ENCODE measurements at regions of chr22 and their contacts with region 1.

Region 1: DNA sequence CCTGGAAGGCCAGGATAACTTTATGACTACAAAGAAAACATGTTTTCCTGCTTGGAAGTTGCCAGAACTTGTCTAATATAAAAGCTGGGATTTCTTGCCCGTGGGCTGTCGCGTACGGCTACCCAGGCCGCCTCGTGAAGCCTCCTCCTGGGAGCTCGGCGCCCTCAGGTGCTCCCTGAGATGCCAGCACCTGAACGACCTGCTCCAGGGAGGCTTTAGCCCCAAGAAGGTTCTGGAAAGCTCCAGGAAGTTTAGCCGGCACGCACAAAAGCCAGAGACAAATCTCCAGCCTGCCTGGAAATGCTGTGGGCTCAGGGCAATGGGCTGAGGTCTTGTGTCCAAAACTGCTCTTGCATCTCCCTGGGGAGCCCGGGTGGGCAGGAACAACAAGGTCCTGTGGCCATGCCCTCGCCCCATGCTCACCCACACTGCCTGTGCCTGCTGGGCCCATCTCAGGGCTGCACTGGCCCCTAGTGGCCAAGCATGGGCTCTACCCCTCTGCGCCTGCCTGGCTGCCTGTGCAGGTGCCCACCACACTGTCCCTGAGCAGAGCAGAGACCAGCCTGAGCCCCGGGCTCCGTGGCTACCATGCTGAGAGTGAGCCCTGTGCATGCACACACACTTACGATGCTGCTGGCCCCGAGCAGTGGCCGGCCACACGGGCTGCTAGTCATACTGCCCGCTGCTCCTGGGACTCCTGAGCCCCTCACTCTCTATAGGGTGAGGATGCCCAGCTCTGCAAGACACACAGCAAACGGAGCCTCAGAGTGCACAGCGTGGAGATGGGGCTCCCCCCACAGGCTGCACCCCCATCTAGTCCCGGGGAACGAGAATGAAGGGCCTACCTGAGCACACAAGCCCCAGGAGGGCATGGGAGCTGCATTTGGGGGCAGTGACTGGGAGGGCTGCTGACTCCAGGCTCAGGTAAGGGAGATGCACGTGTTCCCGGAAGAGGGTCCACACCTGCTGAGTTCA is 4.9 kb upstream of the CELSR1 start:
- DNase-seq: no peak
- H3K4me3 ChIP-seq: no peak overlapping the region
- CTCF ChIP-seq: peak; percentile 98

Region 2: GRCh38 chr22:46335201-46336118 is 206.8 kb before region 1 on chr22 and contains the start of gene TRMU:
- CTCF ChIA-PET with region 1: interaction called, 15 read pairs
- POLR2A ChIA-PET with region 1: no interaction called
- DNase-seq: peak; percentile 29
- H3K4me3 ChIP-seq: peak within 1 kb of the TSS; percentile 90
- CTCF ChIP-seq: no peak

Region 3: GRCh38 chr22:46355371-46355995 is 186.8 kb before region 1 on chr22:
- CTCF ChIA-PET with region 1: interaction called, 53 read pairs
- POLR2A ChIA-PET with region 1: interaction called, 3 read pairs
- DNase-seq: no peak
- H3K4me3 ChIP-seq: no peak overlapping the region
- CTCF ChIP-seq: peak; percentile 85

Region 4: DNA sequence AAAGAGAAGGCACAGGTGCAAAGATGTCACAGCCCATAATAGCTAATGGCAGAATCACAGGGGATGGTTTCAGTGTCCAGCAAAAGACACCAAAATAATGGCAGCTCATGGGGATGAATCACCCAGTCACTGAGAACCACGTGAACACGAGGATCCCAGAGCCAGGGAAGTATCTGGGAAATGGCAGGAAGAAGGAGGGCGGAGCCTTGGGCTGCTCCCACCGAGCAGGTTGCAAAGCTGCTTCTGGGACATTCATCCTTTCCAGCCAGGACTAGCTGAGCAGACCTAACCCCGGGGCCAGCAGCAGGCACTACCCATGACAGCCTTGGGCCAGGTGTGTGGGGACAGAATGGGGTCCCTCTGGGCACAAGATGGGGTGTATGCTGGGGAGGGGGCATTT is 161.1 kb before region 1 on chr22:
- CTCF ChIA-PET with region 1: no interaction called
- POLR2A ChIA-PET with region 1: no interaction called
- DNase-seq: no peak
- H3K4me3 ChIP-seq: no peak overlapping the region
- CTCF ChIP-seq: no peak

Region 5: DNA sequence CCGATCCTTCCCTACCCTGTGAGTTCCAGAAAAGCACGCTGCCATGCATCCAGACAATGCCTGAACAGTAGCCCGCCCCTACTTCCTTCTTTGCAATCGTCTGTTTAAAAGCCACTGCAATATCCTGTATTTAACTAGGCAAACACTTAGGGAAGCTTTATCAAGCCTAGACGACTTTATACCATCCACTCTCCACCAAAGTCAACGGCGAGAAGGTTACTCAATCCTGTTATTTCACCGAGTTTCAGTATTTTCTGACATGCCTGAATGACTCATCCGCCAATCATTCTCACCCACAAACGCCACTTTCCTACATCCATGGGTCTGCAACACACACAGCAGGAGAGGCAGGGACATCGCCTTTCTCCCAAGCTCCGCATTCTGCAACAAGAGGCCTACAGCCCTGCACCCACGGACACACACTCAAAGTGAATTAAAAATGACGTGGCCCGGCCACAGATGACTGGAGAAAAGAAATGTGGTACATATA is 14.1 kb before region 1 on chr22:
- CTCF ChIA-PET with region 1: interaction called, 17 read pairs
- POLR2A ChIA-PET with region 1: no interaction called
- DNase-seq: no peak
- H3K4me3 ChIP-seq: no peak overlapping the region
- CTCF ChIP-seq: no peak

Region 6: DNA sequence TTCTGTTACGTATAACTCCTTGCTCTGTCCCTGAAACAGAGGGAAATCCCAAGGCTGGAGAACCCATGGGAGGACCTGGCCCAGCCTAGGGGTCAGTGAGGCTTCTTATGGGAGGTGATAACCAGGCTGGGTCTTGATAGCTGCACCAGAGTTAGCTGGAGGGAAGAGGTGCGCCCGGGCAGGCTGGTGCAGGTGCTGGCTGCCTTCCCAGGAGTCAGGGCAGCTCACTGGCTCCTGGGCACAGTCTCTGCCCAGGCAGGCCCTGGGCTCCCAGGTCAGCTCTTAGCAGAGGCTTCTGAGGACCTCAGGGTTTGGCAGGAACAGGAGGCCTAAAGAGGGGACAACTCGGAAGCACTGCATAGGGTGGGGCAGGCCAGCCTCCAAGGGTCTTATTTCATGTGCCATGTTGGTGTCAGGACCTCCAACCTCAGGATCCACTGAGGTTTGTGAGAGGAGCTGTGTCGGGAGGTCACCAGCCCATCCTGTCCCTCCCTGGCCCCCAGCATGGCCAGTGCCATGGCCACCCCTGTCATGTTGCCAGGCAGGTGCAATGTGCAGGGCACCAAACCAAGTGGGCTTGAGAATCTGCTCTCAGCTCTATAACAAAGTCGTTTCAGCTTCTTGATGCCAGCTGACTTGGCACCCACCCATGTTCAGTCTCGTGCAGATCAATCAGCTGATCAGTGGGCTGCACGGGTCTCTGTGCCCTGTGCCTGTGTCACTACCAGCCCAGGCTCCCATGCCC is 15.6 kb after region 1 on chr22:
- CTCF ChIA-PET with region 1: interaction called, 28 read pairs
- POLR2A ChIA-PET with region 1: no interaction called
- DNase-seq: no peak
- H3K4me3 ChIP-seq: no peak overlapping the region
- CTCF ChIP-seq: no peak